Keratinocyte (primary cell): ENCODE measurements at regions of chr17 and their contacts with region 1.

Region 1: DNA sequence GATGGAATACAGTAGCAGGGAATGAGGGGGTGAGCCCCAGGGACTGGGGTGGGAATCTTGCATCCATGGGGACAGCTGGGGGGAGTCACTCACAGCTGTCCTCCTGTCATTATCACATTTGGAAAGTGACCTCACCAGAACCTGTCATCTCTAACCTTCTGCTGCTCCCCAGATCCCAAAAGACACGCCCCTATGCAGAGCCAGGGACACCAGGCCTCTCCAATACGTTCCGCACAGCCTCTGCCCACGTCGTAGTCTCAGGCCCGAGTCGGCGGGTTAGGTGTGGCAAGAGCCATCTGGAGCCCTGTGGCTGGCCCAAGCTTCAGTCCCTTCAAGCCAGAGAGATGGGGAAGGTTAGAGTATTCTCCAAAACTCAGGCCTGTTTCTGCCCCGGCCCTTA is 214.3 kb downstream of the ENGASE start:
- DNase-seq: no peak
- H3K4me3 ChIP-seq: no peak overlapping the region
- H3K27ac ChIP-seq: no peak overlapping the region
- H3K4me1 ChIP-seq: no peaks in the 10 kb centered on the region
- H3K27me3 ChIP-seq: peaks cover 12% of the 10 kb centered on the region
- CTCF ChIP-seq: no peak

Region 2: DNA sequence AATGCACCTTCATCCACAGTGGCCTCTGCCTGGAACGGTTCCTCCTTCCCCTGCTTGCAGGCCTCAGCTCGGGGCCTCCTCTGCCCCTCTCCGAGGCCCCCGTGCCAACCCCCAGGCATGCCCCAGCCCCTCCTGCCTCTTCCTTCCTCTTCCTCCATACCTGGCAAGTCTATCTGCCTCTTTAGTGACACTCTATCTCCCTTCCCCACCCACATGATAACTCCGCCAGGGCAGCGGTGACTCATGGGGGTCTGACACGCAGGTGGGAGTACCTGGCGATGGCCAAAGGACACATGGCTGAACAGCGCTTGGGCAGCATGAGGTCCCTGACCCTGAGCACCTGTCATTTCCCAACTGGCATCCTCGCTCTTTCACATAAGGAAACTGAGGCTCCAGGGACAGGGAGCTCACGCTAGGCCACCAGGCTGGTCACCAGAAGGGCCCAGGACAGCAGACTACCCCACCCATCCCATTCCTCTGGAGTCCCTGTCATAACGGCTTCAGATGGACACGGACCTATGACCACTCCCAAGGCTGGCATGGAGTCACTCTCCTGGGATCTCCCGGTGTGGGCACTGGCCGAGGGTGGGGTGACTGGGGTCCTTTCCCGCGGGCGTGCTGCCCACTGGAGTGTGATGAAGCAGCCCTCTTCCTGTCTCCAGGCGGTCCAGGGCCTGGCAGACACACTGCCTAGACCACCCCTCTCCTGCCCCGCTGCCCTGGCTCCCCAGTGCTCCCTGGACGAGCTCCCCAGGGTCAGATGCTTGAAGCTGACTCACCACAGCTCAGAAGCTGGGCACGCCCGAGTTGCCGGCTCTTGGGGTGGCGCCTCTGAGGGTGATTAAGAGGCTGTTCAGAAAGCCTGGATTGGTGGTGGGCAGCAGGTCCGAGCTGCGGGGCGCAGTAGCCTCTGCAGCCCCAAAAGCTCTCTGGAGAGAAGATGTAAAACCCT is 113.8 kb before region 1 on chr17:
- dilution Hi-C with region 1: no loop called
- DNase-seq: no peak
- H3K4me3 ChIP-seq: no peak overlapping the region
- H3K27ac ChIP-seq: no peak overlapping the region
- H3K4me1 ChIP-seq: no peaks in the 10 kb centered on the region
- H3K27me3 ChIP-seq: peaks cover 25% of the 10 kb centered on the region
- CTCF ChIP-seq: no peak

Region 3: GRCh38 chr17:79188048-79188447 is 100.9 kb before region 1 on chr17:
- dilution Hi-C with region 1: loop called (anchors 5 kb)
- DNase-seq: no peak
- H3K4me3 ChIP-seq: no peak overlapping the region
- H3K27ac ChIP-seq: no peak overlapping the region
- H3K4me1 ChIP-seq: no peaks in the 10 kb centered on the region
- H3K27me3 ChIP-seq: peaks cover 57% of the 10 kb centered on the region
- CTCF ChIP-seq: peak; percentile 45 to 94 (median 93)